B cell (primary cell): ENCODE measurements at regions of chr6 and their contacts with region 1.

Region 1: GRCh38 chr6:26537846-26538571 is at the start of gene HMGN4:
- DNase-seq: peak; percentile 97
- ATAC-seq: peak; percentile 68
- H3K4me3 ChIP-seq: peak within 1 kb of the TSS; percentile 89 to 98 (median 92)
- H3K4me3 Mint-ChIP-seq: peak within 1 kb of the TSS; percentile 96
- H3K27ac ChIP-seq: peak within 1 kb of the TSS; percentile 84 to 94
- H3K27ac Mint-ChIP-seq: peak within 1 kb of the TSS; percentile 99
- H3K4me1 ChIP-seq: peaks cover 29 to 35% of the 10 kb centered on the region in 2 donors
- H3K4me1 Mint-ChIP-seq: peaks cover 56% of the 10 kb centered on the region
- H3K27me3 ChIP-seq: no peaks in the 10 kb centered on the region
- H3K27me3 Mint-ChIP-seq: peaks cover 3% of the 10 kb centered on the region
- CTCF ChIP-seq: peak; percentile 8
- total RNA-seq, gene HMGN4: 81.1 and 82.4 TPM in 2 replicates

Region 2: GRCh38 chr6:26258200-26258977 is 279.6 kb before region 1 on chr6:
- CTCF ChIA-PET with region 1: no interaction called
- POLR2A ChIA-PET with region 1: no interaction called
- intact Hi-C with region 1: no loop called
- DNase-seq: no peak
- ATAC-seq: no peak
- H3K4me3 ChIP-seq: no peak overlapping the region
- H3K4me3 Mint-ChIP-seq: no peak overlapping the region
- H3K27ac ChIP-seq: no peak overlapping the region
- H3K27ac Mint-ChIP-seq: no peak overlapping the region
- H3K4me1 ChIP-seq: peaks cover 0 to 3% of the 10 kb centered on the region in 2 donors
- H3K4me1 Mint-ChIP-seq: peaks cover 6% of the 10 kb centered on the region
- H3K27me3 ChIP-seq: no peaks in the 10 kb centered on the region
- H3K27me3 Mint-ChIP-seq: no peaks in the 10 kb centered on the region
- CTCF ChIP-seq: no peak

Region 3: DNA sequence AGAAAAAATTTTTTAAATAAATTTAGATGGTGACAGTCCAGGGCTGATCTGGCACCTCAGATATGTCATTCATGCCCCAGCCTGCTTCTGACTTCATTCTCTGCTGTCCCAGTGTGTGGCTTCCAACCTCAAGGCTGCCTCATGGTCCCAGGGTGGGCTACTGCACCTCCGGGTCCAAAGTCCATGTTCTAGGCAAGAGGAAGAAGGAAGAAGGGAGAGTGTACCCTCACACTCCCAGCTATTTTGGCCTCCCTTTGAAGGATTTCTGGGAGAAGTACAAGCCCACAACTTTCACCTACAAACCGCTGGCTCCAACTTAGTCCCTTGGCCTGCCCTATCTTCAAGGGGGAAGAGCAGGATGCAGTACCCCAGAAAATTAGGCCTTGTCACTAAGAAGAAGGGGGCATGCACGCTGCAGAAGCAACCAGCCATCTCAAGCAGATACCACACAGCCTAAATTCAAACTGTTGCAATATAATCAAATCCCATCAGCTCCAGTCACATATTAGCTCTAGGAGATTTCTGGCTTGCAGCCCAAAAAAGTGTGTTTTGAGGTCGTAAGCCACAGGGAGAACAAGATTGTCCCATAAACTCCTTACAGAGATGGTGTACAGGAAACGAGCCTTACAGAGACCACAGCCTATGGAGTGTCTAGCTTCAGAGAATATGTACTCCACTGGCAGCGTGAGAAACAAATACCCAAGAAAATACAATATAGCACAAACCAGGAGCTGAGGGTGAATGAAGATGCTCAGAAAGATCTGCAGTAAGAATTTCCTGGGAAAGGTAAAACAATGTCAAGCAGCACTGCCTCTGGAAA is 173.9 kb before region 1 on chr6:
- CTCF ChIA-PET with region 1: no interaction called
- POLR2A ChIA-PET with region 1: no interaction called
- intact Hi-C with region 1: loop called (anchors 5 kb)
- DNase-seq: peak; percentile 61
- ATAC-seq: no peak
- H3K4me3 ChIP-seq: peak overlapping the region; percentile 69 to 99 (median 71)
- H3K4me3 Mint-ChIP-seq: no peak overlapping the region
- H3K27ac ChIP-seq: peak overlapping the region; percentile 84 to 90
- H3K27ac Mint-ChIP-seq: no peak overlapping the region
- H3K4me1 ChIP-seq: peaks cover 35 to 46% of the 10 kb centered on the region in 2 donors
- H3K4me1 Mint-ChIP-seq: peaks cover 40% of the 10 kb centered on the region
- H3K27me3 ChIP-seq: peaks cover 0 to 12% (median 4%) of the 10 kb centered on the region in 4 experiments
- H3K27me3 Mint-ChIP-seq: peaks cover 9% of the 10 kb centered on the region
- CTCF ChIP-seq: no peak

Region 4: DNA sequence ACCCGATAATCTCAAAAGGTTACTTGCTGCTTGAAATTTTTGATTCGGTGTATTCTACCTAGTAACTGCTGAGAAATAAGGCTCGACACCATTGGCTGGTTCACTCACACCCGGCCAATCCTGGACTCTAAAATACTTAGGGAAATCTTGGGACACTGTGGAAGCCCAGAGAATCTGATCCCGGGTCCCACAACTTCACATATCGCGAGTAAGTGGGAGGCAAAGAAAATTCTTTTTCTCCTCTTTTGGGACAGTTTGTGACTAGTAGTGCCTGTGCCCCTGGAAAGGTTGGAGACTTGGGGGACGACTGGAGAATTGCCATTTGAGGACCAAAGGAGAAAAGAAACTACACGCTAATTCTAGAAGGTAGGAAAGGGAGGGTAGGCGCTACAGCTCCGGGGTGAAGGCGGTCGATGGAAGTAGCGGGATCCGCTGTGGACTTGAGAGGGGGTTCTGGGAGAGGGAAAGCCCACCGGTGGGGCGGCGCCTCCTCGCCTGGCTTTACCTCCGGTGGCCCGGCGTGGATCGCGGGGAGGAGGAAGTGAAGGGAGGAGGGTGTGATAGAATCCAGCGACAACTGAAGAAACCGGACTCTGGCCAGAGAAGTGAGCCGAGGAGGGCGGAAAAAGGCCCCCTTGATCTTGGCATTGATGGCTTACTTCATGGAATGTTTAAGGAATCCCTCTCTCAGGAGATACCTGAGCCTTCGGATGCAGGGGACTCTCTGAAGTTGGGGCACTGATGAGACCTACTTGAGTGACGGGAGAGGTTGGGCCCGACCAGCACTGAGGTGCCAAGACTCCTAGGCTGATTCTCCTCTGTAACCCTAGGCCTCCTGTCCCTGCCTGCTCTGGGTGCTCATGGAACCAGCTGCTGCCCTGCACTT is 116.5 kb before region 1 on chr6:
- CTCF ChIA-PET with region 1: no interaction called
- POLR2A ChIA-PET with region 1: no interaction called
- intact Hi-C with region 1: loop called (anchors 1 kb)
- DNase-seq: peak; percentile 80
- ATAC-seq: peak; percentile 93
- H3K4me3 ChIP-seq: peak overlapping the region; percentile 85 to 97 (median 95)
- H3K4me3 Mint-ChIP-seq: no peak overlapping the region
- H3K27ac ChIP-seq: peak overlapping the region; percentile 57 to 70
- H3K27ac Mint-ChIP-seq: peak overlapping the region; percentile 70
- H3K4me1 ChIP-seq: peaks cover 6 to 14% of the 10 kb centered on the region in 2 donors
- H3K4me1 Mint-ChIP-seq: peaks cover 5% of the 10 kb centered on the region
- H3K27me3 ChIP-seq: no peaks in the 10 kb centered on the region
- H3K27me3 Mint-ChIP-seq: no peaks in the 10 kb centered on the region
- CTCF ChIP-seq: no peak

Region 5: DNA sequence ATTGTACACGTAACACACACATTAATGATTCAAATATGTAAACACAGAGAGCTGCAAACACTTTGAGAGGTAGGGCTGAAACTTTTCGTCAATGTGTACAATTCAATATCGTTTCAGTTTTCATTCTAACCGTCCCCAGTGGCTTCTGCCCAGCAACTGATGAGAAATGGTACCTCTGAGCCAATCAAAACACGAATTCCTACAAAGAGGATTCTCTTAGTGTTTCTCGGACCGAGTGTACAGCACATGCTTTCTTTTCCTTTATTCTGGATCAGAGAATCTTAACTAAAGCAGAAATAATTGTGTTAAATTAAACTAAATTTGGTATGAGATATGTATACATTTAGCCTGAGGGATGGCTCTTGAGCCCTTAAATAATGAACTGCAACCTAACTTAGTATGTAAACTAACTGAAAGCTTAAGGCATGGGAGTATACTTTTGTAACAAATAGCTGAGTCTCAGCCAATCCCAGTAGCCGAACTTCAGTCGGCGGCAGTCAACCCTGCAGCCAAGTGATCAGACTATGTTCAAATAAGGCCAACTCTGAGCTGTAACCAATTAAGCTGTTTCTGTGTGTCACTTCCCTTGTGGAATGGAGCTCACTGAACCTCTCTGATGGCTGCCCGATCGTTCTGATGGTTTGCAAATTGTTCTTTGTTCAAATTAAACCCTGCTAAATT is 64.1 kb before region 1 on chr6:
- CTCF ChIA-PET with region 1: interaction called, 6 read pairs
- POLR2A ChIA-PET with region 1: interaction called, 34 read pairs
- intact Hi-C with region 1: loop called (anchors 1 kb)
- DNase-seq: peak; percentile 94
- ATAC-seq: peak; percentile 94
- H3K4me3 ChIP-seq: peak overlapping the region; percentile 55 to 88 (median 67)
- H3K4me3 Mint-ChIP-seq: peak overlapping the region; percentile 92
- H3K27ac ChIP-seq: peak overlapping the region; percentile 92 to 94
- H3K27ac Mint-ChIP-seq: peak overlapping the region; percentile 98
- H3K4me1 ChIP-seq: peaks cover 58 to 61% of the 10 kb centered on the region in 2 donors
- H3K4me1 Mint-ChIP-seq: peaks cover 64% of the 10 kb centered on the region
- H3K27me3 ChIP-seq: no peaks in the 10 kb centered on the region
- H3K27me3 Mint-ChIP-seq: no peaks in the 10 kb centered on the region
- CTCF ChIP-seq: no peak

Region 6: GRCh38 chr6:26553635-26554446 is 15.8 kb after region 1 on chr6:
- CTCF ChIA-PET with region 1: interaction called, 17 read pairs
- POLR2A ChIA-PET with region 1: interaction called, 10 read pairs
- intact Hi-C with region 1: loop called (anchors 1 kb)
- DNase-seq: peak; percentile 92
- ATAC-seq: peak; percentile 42
- H3K4me3 ChIP-seq: peak overlapping the region; percentile 59 to 90 (median 74)
- H3K4me3 Mint-ChIP-seq: no peak overlapping the region
- H3K27ac ChIP-seq: peak overlapping the region; percentile 26 to 62
- H3K27ac Mint-ChIP-seq: no peak overlapping the region
- H3K4me1 ChIP-seq: peaks cover 15 to 45% of the 10 kb centered on the region in 2 donors
- H3K4me1 Mint-ChIP-seq: peaks cover 22% of the 10 kb centered on the region
- H3K27me3 ChIP-seq: no peaks in the 10 kb centered on the region
- H3K27me3 Mint-ChIP-seq: no peaks in the 10 kb centered on the region
- CTCF ChIP-seq: no peak